K562 (cell line): ENCODE measurements at regions of chr17 and their contacts with region 1.

Region 1: DNA sequence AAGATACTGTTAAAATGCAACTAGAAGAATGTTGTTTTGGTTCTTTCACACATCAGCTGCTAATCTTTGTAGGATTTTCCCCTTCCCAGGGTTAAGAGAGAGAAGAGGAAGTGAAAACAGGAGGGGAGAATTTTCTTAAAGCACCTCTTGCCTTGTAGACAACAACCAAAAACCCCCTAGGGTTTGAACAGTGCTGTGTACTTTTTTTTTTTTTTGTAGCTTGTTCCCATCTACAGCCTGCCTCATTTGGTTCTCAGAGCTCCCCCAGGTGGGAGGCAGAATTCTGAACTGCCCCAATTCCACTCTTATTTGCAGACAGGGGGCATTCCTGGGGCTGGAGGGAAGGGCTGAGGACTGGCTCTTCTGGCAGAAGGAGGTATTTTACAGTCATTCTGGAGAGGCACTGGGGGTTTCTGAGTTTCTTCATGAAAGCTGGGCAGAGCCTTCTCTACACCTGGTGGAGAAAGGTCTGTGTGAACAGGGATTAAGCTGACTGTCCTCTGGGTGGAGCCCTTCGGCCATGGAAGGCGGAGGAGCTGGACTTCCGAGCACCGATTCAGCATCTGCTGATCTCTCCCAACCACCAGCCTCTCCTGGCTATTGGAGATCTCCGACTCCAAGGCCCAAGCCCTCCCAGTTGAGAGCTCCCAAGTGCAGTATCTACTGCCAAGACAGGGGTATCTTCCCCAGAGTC is 32.2 kb downstream of the SMARCE1 start:
- DNase-seq: peak; percentile 52 to 75 (median 64)
- ATAC-seq: peak; percentile 92
- H3K4me3 ChIP-seq: no peak overlapping the region
- H3K27ac ChIP-seq: no peak overlapping the region
- H3K4me1 ChIP-seq: no peaks in the 10 kb centered on the region
- H3K27me3 ChIP-seq: peaks cover 11 to 55% of the 10 kb centered on the region in 2 experiments
- CTCF ChIP-seq: peak; percentile 80 to 83 (median 81)
- EP300 ChIP-seq: no peak
- POLR2A ChIP-seq: no peak
- RAD21 ChIP-seq: peak; percentile 56 to 82

Region 2: GRCh38 chr17:40596261-40596919 is 19.1 kb before region 1 on chr17:
- CTCF ChIA-PET with region 1: no interaction called
- POLR2A ChIA-PET with region 1: no interaction called
- in situ Hi-C with region 1: no loop called
- intact Hi-C with region 1: no loop called
- DNase-seq: peak; percentile 60 to 71 (median 70)
- ATAC-seq: peak; percentile 91
- H3K4me3 ChIP-seq: no peak overlapping the region
- H3K27ac ChIP-seq: no peak overlapping the region
- H3K4me1 ChIP-seq: peaks cover 0 to 9% of the 10 kb centered on the region in 2 experiments; a peak in 2 of 5 replicates
- H3K27me3 ChIP-seq: no peaks in the 10 kb centered on the region
- CTCF ChIP-seq: no peak
- EP300 ChIP-seq: no peak
- POLR2A ChIP-seq: no peak
- RAD21 ChIP-seq: no peak

Region 3: DNA sequence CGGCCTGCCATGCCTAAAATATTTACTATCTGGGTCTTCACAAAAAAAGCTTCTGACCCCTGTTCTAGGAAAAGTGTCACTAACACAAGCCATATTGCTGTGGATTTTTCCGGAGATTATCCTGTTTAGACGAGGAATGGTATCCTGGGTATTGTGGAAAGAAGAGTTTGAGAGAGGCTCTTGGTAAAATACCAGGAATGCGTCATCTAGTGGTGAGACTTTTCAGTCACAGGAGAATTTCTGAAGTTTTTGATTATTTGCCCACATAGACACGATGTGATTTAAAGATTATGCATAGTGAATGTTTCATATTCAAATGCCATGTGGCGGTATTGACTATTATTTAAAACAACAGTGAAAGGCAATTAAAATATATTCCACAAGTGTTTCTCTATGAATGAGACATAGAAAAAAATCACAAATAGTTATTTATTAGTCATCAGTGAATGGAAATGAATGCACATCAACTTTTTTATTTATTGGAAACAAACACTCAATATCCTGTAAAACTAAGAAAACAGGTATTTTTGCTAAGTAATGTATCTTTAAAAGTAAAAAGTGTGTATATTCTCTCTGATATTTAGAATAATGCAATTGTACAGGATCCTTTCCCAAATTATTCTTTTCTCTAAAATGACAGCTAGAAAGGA is 176.5 kb after region 1 on chr17:
- CTCF ChIA-PET with region 1: interaction called, 10 read pairs
- POLR2A ChIA-PET with region 1: no interaction called
- in situ Hi-C with region 1: loop called (anchors 5 kb)
- intact Hi-C with region 1: loop called (anchors 1 kb)
- DNase-seq: peak in 2 of 4 experiments; percentile 14 to 15
- ATAC-seq: no peak
- H3K4me3 ChIP-seq: no peak overlapping the region
- H3K27ac ChIP-seq: no peak overlapping the region
- H3K4me1 ChIP-seq: peaks cover 3% of the 10 kb centered on the region in 2 experiments; a peak in 1 of 5 replicates
- H3K27me3 ChIP-seq: peaks cover 21 to 25% of the 10 kb centered on the region in 2 experiments
- CTCF ChIP-seq: peak; percentile 52 to 73 (median 65)
- EP300 ChIP-seq: no peak
- POLR2A ChIP-seq: no peak
- RAD21 ChIP-seq: peak; percentile 54 to 80